CD8-positive, alpha-beta memory T cell (primary cell): ENCODE measurements at regions of chr21 and their contacts with region 1.

Region 1: GRCh38 chr21:33286600-33287456 is 20.7 kb downstream of the IL10RB start:
- DNase-seq: no peak
- H3K4me3 ChIP-seq: no peak overlapping the region
- H3K4me3 Mint-ChIP-seq: no peak overlapping the region
- H3K27ac ChIP-seq: no peak overlapping the region
- H3K27ac Mint-ChIP-seq: peak overlapping the region in 3 of 8 donors; percentile 24 to 90 (median 37)
- H3K4me1 ChIP-seq: no peaks in the 10 kb centered on the region
- H3K4me1 Mint-ChIP-seq: peaks cover 4 to 6% (median 6%) of the 10 kb centered on the region in 3 donors
- H3K27me3 ChIP-seq: no peaks in the 10 kb centered on the region
- H3K27me3 Mint-ChIP-seq: no peaks in the 10 kb centered on the region

Region 2: DNA sequence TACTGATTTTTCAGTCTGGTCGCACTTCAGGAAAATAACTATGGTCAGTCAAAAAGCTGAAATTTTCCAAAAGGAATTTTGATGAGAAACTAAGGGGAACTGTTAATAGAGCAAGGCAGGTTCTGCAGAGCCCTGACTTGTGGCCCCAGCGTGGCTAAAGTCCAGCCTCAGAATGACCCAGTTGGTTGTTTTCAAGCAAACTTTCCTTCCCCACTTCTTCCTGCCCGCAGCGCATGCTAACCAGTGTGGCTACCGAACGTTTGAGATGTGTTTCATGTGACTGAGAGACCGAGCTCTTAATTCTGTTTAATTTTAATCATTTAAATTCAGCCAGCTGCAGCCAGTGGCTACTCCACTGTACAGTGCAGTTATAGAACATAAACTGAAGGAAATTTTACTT is 26.8 kb before region 1 on chr21:
- CTCF ChIA-PET with region 1: no interaction called
- POLR2A ChIA-PET with region 1: no interaction called
- DNase-seq: no peak
- H3K4me3 ChIP-seq: no peak overlapping the region
- H3K4me3 Mint-ChIP-seq: peak overlapping the region; percentile 9 to 72 (median 44)
- H3K27ac ChIP-seq: no peak overlapping the region
- H3K27ac Mint-ChIP-seq: peak overlapping the region; percentile 6 to 85 (median 56)
- H3K4me1 ChIP-seq: peaks cover 28% of the 10 kb centered on the region
- H3K4me1 Mint-ChIP-seq: peaks cover 45 to 80% (median 70%) of the 10 kb centered on the region in 3 donors
- H3K27me3 ChIP-seq: no peaks in the 10 kb centered on the region
- H3K27me3 Mint-ChIP-seq: no peaks in the 10 kb centered on the region

Region 3: GRCh38 chr21:33299181-33299752 is 12.4 kb after region 1 on chr21:
- CTCF ChIA-PET with region 1: no interaction called
- POLR2A ChIA-PET with region 1: interaction called, 12 read pairs
- DNase-seq: peak in 1 of 5 donors; percentile 44
- H3K4me3 ChIP-seq: peak overlapping the region; percentile 2
- H3K4me3 Mint-ChIP-seq: peak overlapping the region in 6 of 7 donors; percentile 5 to 61 (median 46)
- H3K27ac ChIP-seq: no peak overlapping the region
- H3K27ac Mint-ChIP-seq: peak overlapping the region; percentile 7 to 64 (median 54)
- H3K4me1 ChIP-seq: peaks cover 36% of the 10 kb centered on the region
- H3K4me1 Mint-ChIP-seq: peaks cover 34 to 37% (median 34%) of the 10 kb centered on the region in 3 donors
- H3K27me3 ChIP-seq: no peaks in the 10 kb centered on the region
- H3K27me3 Mint-ChIP-seq: no peaks in the 10 kb centered on the region

Region 4: DNA sequence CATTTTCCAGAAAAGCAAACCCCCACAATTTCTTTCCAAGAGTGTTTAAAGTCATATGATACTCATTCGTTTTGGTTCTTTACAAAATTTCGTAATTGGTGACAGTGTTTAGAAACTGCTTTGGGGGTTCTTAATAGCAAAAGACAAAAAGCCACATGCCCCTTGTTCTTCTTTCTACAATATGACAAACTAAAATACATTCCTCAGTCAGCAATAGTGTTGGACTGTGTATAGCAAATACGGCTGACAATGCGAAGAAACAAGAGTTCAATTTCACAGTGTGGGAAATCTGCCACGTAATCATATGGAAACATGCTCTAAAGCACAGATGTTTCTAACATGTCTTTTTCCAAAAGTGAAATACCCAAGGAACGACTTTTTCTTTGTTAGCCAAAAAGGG is 30.3 kb after region 1 on chr21:
- CTCF ChIA-PET with region 1: no interaction called
- POLR2A ChIA-PET with region 1: no interaction called
- DNase-seq: no peak
- H3K4me3 ChIP-seq: no peak overlapping the region
- H3K4me3 Mint-ChIP-seq: no peak overlapping the region
- H3K27ac ChIP-seq: no peak overlapping the region
- H3K27ac Mint-ChIP-seq: no peak overlapping the region
- H3K4me1 ChIP-seq: no peaks in the 10 kb centered on the region
- H3K4me1 Mint-ChIP-seq: no peaks in the 10 kb centered on the region
- H3K27me3 ChIP-seq: no peaks in the 10 kb centered on the region
- H3K27me3 Mint-ChIP-seq: peaks cover 11 to 17% of the 10 kb centered on the region in 2 donors